Ovary (tissue), 10 donors: ENCODE measurements at regions of chr2 and their contacts with region 1.

Region 1: DNA sequence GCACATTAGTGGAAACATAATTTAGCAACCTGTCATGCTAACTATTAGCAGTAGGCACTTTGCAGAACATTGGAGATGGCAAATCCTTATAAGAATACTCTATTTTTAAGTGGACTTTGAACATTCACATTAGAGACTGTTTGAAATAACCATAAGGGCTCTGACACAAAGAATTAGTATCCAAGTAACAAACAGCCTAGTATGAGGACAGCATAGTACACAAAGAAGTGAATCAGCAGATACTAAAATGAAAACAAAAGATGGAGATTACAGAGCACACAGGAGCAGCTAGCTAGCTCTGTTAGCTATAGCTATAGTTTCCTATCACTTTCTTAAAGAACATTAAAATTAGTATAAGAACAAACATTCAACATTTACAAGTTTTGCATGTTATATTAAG is 256.3 kb upstream of the SPOPL start:
- DNase-seq: no peak
- H3K4me3 ChIP-seq: no peak overlapping the region
- H3K27ac ChIP-seq: peak overlapping the region in 1 of 2 donors; percentile 31
- H3K4me1 ChIP-seq: peaks cover 6% of the 10 kb centered on the region
- H3K27me3 ChIP-seq: no peaks in the 10 kb centered on the region
- CTCF ChIP-seq: no peak
- EP300 ChIP-seq: no peak
- POLR2A ChIP-seq: no peak

Region 2: GRCh38 chr2:139836769-139837168 is 1591.5 kb after region 1 on chr2:
- intact Hi-C with region 1: loop called in 1 of 4 experiments (anchors 5 kb)
- DNase-seq: no peak
- H3K4me3 ChIP-seq: no peak overlapping the region
- H3K27ac ChIP-seq: no peak overlapping the region
- H3K4me1 ChIP-seq: no peaks in the 10 kb centered on the region
- H3K27me3 ChIP-seq: no peaks in the 10 kb centered on the region
- CTCF ChIP-seq: no peak
- EP300 ChIP-seq: no peak
- POLR2A ChIP-seq: no peak